HEK293 (cell line): ENCODE measurements at regions of chr7 and their contacts with region 1.

Region 1: DNA sequence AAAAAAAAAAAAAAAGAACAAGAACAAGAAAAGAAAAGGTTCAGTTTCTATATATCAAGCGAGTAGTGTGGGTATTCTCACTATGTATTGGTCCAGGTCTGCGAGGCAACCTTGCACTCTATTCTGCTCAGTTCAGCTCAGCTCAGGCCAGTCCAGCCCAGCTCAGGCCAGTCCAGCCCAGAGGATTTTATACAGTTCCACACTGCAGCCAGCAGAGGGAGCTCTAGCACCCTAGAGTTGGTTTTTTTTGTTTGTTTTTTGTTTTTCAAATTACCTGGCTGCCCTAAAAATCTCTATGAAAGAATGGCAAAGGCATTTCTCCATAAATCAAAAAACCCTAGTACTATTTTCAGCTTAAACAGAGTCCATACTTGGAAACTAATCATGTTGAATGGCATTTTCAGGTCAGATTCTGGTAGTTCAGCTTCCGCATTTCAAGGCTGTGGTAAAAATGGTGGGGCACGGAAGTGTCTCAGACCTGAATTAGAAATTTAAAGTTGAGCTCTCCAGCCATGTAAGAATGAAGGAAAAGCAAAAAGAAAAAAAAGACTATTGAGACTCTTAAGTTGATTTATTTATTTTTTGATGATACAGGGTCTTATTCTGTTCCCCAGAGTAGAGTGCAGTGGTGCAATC is 55.2 kb upstream of the GSDME start:
- H3K4me3 ChIP-seq: no peak overlapping the region
- H3K27ac ChIP-seq: no peak overlapping the region
- H3K4me1 ChIP-seq: no peaks in the 10 kb centered on the region
- CTCF ChIP-seq: peak; percentile 42

Region 2: DNA sequence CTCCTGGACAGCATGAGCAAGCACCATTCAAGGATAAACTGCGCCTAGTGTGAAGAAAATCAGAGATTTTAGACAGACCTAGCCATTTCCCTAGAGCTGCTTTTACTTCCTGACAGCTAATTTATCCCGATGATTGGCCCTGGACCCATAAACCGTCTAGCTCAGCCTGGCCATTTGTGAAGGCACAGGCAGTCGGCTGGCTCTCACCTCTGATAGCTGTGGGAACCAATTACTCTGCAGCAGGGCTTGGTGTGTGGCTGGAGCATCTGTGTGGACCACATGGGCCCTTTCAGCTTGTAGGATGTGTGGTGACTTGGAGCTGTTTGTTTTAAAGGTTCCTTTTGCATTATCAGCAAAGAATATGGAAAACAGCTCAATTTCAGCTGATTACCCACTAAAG is 639.6 kb before region 1 on chr7:
- CTCF ChIA-PET with region 1: no interaction called
- POLR2A ChIA-PET with region 1: no interaction called
- H3K4me3 ChIP-seq: no peak overlapping the region
- H3K27ac ChIP-seq: no peak overlapping the region
- H3K4me1 ChIP-seq: no peaks in the 10 kb centered on the region
- CTCF ChIP-seq: no peak

Region 3: GRCh38 chr7:24764972-24765744 is 47.3 kb before region 1 on chr7:
- CTCF ChIA-PET with region 1: interaction called, 10 read pairs
- POLR2A ChIA-PET with region 1: no interaction called
- H3K4me3 ChIP-seq: no peak overlapping the region
- H3K27ac ChIP-seq: no peak overlapping the region
- H3K4me1 ChIP-seq: no peaks in the 10 kb centered on the region
- CTCF ChIP-seq: no peak

Region 4: DNA sequence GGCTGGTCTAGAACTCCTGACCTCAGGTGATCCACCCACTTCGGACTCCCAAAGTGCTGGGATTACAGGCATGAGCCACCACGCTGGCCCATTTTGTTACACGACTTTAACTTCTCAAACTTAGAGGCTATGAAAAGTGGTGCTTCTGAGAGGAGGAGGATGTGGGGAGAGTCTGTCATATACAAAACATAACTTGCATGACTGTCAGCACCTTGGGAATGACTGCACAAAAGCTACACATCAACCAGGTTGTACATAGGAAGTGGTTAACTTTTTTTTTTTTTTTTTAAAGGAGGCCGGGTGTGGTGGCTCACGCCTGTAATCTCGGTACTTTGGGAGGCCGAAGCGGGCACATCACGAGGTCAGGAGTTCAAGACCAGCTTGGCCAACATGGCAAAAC is 11.8 kb before region 1 on chr7:
- CTCF ChIA-PET with region 1: interaction called, 24 read pairs
- POLR2A ChIA-PET with region 1: interaction called, 6 read pairs
- H3K4me3 ChIP-seq: no peak overlapping the region
- H3K27ac ChIP-seq: no peak overlapping the region
- H3K4me1 ChIP-seq: no peaks in the 10 kb centered on the region; the same call in 1 of the 2 replicates
- CTCF ChIP-seq: no peak

Region 5: DNA sequence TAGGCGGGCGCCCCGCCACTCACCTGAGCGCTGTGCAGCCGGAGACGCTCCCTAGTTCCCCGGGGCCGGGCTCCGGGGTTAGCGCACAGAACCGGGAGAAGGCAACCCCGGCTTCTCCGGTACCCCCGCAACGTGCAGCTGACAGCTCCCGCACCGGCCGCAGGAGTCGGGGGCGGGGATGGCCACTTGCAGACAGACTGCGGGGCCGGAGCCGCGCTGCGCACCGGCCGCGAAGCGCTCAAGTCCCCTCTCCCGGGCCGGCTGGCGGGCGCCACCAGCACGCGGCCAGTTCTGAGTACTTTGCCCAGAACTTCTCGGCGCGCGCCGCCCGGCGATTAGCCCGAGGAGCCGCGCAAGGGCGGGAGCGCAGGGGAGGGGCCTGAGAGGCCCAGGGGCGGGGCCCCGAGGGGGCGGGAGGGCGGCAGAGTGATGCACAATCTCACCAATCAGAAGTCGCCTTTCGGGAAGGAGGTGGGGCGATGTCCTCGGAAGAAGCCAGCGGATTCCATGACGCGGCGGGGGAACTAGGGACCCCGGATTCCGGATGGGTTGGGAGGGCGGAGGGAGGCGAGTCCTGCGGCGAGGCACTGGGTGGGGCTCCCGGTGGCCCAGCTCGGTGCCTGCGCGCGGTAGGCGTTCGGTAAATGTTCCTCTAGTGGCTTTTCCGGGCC is 167.6 kb after region 1 on chr7 and contains the start of gene OSBPL3:
- CTCF ChIA-PET with region 1: interaction called, 18 read pairs
- POLR2A ChIA-PET with region 1: no interaction called
- H3K4me3 ChIP-seq: peak within 1 kb of the TSS; percentile 81
- H3K27ac ChIP-seq: peak within 1 kb of the TSS; percentile 87
- H3K4me1 ChIP-seq: peaks cover 2% of the 10 kb centered on the region; the same call in 1 of the 2 replicates
- CTCF ChIP-seq: no peak

Region 6: GRCh38 chr7:25083201-25083600 is 270.8 kb after region 1 on chr7:
- CTCF ChIA-PET with region 1: interaction called, 19 read pairs
- POLR2A ChIA-PET with region 1: no interaction called
- H3K4me3 ChIP-seq: no peak overlapping the region
- H3K27ac ChIP-seq: no peak overlapping the region
- H3K4me1 ChIP-seq: peaks cover 3% of the 10 kb centered on the region; the same call in 1 of the 2 replicates
- CTCF ChIP-seq: no peak